Common myeloid progenitor, CD34-positive (primary cell): ENCODE measurements at regions of chr5 and their contacts with region 1.

Region 1: DNA sequence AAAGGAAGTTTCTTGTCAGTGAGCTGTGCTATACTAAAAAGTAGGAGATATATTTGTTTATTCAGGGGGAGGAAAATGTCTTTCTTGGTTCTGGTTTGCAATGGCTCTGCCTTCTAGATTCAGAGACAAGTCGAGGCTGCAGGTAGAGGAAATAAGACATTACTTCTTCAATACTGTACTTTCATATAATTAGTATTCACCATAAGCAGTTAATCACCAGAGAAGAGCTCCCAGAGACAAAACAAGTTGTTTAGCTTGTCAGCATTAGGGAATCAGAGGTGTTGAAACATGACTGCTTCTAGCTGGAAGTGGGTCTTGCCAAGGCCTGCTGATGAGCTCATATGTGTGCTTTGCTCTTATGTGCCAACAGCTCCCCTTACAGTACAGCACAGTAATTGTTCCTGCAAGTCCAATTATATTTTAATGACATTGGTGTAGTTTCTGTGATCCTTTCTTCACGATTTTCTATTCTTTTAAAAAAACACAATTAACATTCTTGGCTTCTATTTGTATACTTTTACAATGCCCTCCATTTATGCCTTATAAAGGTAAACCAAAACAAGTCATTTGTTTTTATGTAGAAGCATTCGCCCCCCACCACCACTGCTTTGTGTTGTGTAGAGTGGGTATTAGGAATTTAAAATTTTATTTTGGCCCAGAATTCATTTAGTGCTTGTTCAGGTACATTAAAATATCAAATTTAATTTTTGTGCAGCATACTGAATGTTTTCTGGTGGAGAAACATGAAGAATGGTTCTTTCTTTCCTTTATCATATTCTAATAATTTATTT is 112.2 kb downstream of the RPS23 start:
- DNase-seq: peak; percentile 89 to 94 (median 94)
- H3K4me3 ChIP-seq: no peak overlapping the region
- H3K27ac ChIP-seq: no peak overlapping the region
- H3K4me1 ChIP-seq: peaks cover 0 to 11% (median 5%) of the 10 kb centered on the region in 4 experiments
- H3K27me3 ChIP-seq: no peaks in the 10 kb centered on the region

Region 2: GRCh38 chr5:82107267-82107666 is 58.7 kb before region 1 on chr5:
- CTCF ChIA-PET with region 1: interaction called, 29 read pairs
- POLR2A ChIA-PET with region 1: no interaction called
- DNase-seq: peak; percentile 50 to 64 (median 55)
- H3K4me3 ChIP-seq: peak overlapping the region in 2 of 7 experiments; percentile 17 to 54
- H3K27ac ChIP-seq: peak overlapping the region in 1 of 2 experiments; percentile 75
- H3K4me1 ChIP-seq: peaks cover 4 to 31% (median 7%) of the 10 kb centered on the region in 4 experiments
- H3K27me3 ChIP-seq: no peaks in the 10 kb centered on the region

Region 3: DNA sequence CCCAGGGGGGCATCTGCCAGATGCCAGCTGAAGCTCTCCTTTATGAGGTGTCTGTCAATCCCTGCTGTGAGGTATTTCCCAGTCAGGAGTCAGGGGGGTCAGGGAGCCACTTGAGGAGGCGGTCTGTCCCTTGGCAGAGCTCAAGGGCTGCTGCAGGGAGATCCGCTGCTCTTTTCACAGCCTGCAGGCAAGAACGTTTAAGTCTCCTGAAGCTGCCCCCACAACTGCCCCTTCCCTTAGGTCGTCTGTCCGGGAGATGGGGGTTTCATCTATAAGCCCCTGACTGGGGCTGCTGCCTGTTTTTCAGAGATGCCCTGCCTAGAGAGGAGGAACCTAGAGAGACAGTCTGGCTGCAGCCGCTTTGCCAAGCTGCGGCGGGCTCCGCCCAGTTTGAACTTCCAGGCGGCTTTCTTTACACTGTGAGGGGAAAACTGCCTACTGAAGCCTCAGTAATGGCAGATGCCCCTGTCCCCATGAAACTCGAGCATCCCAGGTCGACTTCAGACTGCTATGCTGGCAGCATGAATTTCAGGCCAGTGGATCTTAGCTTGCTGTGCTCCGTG is 36.1 kb before region 1 on chr5:
- CTCF ChIA-PET with region 1: no interaction called
- POLR2A ChIA-PET with region 1: no interaction called
- DNase-seq: no peak
- H3K4me3 ChIP-seq: no peak overlapping the region
- H3K27ac ChIP-seq: no peak overlapping the region
- H3K4me1 ChIP-seq: no peaks in the 10 kb centered on the region
- H3K27me3 ChIP-seq: no peaks in the 10 kb centered on the region

Region 4: DNA sequence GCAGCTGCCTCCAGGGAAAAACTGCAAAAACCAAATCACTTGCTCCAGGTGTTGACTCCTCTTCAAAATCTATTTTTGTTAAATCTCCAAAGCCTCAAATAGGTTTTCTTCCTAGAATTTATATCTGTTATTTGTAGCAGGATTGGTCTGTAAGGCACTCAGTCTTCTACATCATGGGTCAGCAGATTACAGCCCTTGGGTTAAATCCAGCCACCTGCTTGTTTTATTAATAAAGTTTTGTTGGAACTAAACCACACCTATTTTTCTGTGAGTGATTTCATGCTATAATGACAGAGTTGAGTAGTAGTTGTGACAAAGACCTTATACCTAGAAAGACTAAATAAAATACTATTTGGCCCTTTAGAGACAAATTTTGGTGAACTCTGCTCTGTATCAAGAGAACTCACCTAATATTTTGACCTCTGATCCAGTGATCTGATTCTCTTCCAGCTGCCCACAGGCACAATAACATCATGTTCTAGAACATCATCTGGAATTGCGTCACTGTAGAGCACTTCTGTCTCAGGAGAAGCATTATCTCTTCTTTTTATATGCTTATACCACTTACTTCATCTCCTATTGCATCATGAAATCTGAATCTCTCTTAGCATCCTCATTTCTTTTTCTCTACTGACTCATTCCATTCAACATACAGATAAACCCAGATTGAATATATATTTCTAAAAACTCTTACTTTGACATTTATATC is 17.9 kb before region 1 on chr5:
- CTCF ChIA-PET with region 1: interaction called, 14 read pairs
- POLR2A ChIA-PET with region 1: no interaction called
- DNase-seq: no peak
- H3K4me3 ChIP-seq: no peak overlapping the region
- H3K27ac ChIP-seq: no peak overlapping the region
- H3K4me1 ChIP-seq: no peaks in the 10 kb centered on the region
- H3K27me3 ChIP-seq: no peaks in the 10 kb centered on the region

Region 5: DNA sequence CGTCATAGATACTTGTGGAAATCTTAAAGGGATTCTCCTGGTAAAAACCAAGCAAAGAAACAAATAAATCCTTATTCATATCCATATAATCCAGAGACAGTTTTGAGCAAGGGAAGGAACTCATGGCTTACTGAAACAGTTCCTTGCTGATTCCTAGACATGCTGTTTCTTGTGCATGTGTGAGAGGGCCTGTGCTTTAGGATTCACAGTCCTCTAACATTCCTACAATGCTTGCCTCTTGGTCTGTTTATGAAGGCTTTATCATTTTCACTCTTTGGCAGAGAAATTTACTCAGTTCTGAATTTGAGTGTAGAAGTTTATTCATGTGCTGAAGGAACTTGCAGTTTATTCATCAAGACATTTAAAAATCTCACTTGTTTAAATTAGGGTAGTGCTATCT is 11.2 kb before region 1 on chr5:
- CTCF ChIA-PET with region 1: interaction called, 14 read pairs
- POLR2A ChIA-PET with region 1: no interaction called
- DNase-seq: no peak
- H3K4me3 ChIP-seq: no peak overlapping the region
- H3K27ac ChIP-seq: no peak overlapping the region
- H3K4me1 ChIP-seq: peaks cover 0 to 12% (median 6%) of the 10 kb centered on the region in 4 experiments
- H3K27me3 ChIP-seq: no peaks in the 10 kb centered on the region

Region 6: DNA sequence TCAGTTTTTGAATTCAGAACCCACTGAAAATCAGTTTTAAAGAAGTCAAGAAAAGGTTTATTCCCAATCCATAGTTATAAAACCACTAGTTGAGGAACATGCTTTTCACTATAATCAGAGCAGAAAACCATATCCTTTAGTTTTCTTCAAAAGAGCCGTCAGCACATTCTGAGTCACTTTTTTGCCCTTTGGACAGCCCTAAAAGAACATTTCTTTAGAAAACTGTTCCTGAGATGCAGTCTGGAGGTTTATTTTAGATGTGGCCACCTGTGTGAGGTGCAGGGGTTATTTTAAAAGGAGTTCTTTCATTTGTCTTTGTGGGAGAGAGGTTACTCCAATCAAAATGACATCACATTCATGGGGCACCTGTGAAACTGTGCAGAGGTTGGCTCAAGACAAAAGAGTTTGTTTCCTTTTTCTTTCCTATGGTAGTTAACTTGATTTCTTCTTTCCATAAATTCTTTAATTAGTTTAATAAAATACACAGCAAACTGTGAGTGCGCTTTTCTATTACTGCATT is 333.9 kb after region 1 on chr5:
- CTCF ChIA-PET with region 1: no interaction called
- POLR2A ChIA-PET with region 1: no interaction called
- DNase-seq: no peak
- H3K4me3 ChIP-seq: no peak overlapping the region
- H3K27ac ChIP-seq: no peak overlapping the region
- H3K4me1 ChIP-seq: no peaks in the 10 kb centered on the region
- H3K27me3 ChIP-seq: no peaks in the 10 kb centered on the region